ENCODE measurements at regions of chr3 and their contacts with region 1.

Region 1: GRCh38 chr3:143001369-143002082 is at the start of gene U2SURP:
- DNase-seq: peak; percentile 91
- H3K4me3 Mint-ChIP-seq: peak within 1 kb of the TSS; percentile 95
- H3K27ac Mint-ChIP-seq: peak within 1 kb of the TSS; percentile 96
- H3K4me1 Mint-ChIP-seq: peaks cover 45% of the 10 kb centered on the region
- H3K27me3 Mint-ChIP-seq: peaks cover 6% of the 10 kb centered on the region
- total RNA-seq, gene U2SURP: 186 and 205 TPM in 2 replicates

Region 2: DNA sequence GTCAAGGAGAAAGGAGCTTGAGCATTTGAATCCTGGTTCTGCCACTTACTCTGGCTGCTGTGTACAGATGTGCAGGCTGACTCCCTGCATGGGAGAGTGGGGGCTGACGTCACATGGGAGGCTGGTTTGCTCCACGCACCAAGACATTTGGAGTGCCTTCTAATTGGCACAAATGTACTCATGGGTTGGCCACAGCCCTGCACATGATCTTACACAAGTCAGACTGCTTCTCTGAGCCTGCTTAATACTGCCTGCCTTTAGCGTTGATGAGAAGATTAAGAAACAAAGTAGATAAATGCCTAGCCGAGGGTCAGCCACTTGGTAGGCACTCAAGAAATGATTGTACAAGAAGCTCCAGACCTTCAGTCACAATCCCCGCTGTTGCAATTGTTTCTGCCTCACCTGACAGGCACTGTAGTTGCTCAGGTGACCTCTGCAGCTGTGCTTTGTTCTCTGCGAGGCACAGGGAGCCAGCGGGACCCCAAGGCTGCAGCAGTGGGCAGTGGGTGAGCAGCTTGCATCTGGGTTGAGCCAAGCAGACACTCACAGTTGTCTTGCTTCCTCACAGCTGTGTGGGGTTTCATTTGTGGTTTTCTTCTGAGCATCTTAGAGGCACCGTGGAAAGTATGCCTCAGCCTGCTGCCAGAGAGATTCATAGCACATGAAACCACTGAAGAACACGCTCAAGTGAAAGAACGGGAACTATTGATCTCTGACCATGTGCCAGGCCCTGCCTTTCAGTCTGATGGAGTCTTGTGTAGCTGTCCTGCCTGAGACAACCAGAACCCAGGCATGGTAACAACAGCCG is 1205.2 kb before region 1 on chr3:
- intact Hi-C with region 1: loop called (anchors 10 kb)
- DNase-seq: peak; percentile 74
- H3K4me3 Mint-ChIP-seq: peak overlapping the region; percentile 79
- H3K27ac Mint-ChIP-seq: peak overlapping the region; percentile 99
- H3K4me1 Mint-ChIP-seq: peaks cover 47% of the 10 kb centered on the region
- H3K27me3 Mint-ChIP-seq: peaks cover 3% of the 10 kb centered on the region

Region 3: DNA sequence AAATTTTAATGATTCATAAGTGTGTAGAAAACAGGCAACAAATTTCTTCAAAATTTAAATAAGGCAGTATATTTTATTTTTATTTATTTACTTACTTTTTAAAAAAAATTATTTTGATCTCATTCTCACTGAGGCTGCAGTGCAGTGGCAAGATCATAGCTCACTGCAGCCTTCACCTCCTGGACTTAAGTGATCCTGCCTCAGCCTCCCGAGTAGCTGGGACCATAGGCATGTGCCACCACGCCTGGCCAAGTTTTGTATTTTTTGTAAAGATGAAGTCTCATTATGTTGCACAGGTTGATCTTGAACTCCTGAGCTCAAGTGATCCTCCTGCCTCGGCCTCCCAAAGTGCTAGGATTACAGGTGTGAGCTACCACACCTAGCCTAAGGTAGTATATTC is 492.4 kb before region 1 on chr3:
- intact Hi-C with region 1: loop called (anchors 5 kb)
- DNase-seq: no peak
- H3K4me3 Mint-ChIP-seq: peak overlapping the region; percentile 75
- H3K27ac Mint-ChIP-seq: peak overlapping the region; percentile 88
- H3K4me1 Mint-ChIP-seq: peaks cover 12% of the 10 kb centered on the region
- H3K27me3 Mint-ChIP-seq: no peaks in the 10 kb centered on the region

Region 4: DNA sequence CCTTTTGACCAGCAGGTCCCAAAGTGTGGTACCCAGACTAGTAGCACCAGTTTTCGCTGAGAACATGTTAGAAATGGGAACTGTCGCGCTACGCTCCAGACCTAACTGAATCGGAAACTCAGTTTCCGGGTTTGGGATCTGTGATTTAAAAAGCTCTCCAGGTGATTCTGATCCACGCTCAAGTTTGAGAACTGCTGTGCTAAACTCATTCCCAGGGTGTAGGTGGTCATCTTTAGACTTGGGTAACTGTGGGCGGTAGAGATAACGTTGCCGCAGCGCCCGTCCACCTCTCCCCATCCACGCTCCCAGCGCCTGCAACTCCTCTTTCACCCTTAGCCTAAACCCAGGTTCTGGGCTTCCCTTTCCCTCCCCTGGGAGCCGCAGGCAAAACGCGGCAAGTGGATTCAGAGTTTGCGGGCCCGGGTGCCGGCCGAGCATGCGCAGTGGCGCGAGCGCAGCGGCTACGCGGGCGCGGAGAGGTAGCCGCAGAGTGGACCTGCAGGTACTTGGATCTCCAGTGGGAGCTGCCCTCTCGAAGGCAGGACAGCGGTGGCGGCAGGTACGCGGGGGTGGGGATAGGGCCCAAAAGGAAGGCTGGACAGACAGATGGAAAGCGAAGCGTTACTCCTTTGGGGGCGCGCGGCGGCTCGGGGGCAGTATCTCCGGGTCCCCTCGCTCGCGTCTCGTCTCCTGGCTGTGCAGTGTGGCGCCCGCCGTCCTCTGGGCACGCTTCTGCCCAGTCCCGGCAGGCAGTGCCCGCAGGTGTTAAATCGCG is 405.4 kb before region 1 on chr3 and contains the start of gene PLS1:
- intact Hi-C with region 1: loop called (anchors 1 kb)
- DNase-seq: peak; percentile 89
- H3K4me3 Mint-ChIP-seq: peak within 1 kb of the TSS; percentile 95
- H3K27ac Mint-ChIP-seq: peak within 1 kb of the TSS; percentile 69
- H3K4me1 Mint-ChIP-seq: peaks cover 25% of the 10 kb centered on the region
- H3K27me3 Mint-ChIP-seq: peaks cover 4% of the 10 kb centered on the region
- total RNA-seq, gene PLS1: 4.4 and 4.8 TPM in 2 replicates

Region 5: DNA sequence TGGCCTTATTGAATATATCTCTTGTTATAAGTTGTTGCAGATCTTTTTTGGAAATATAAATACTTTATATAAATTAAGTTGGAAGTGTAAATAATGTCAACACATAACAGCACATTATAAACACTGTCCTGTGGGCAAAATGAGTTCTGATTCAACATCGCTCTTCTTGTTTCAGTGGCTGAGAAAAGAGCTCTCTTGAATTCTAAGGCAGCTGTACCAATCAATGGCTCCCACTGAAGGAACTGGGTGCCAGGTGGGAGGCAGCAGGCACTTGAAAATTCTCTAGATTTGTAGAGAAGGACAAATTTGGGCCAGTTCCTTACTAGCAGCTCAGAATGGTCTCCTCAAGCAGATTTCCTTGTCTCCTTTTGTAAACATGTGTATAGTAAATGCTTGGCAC is 163.7 kb after region 1 on chr3:
- intact Hi-C with region 1: loop called (anchors 2 kb)
- DNase-seq: no peak
- H3K4me3 Mint-ChIP-seq: peak overlapping the region; percentile 52
- H3K27ac Mint-ChIP-seq: peak overlapping the region; percentile 87
- H3K4me1 Mint-ChIP-seq: peaks cover 71% of the 10 kb centered on the region
- H3K27me3 Mint-ChIP-seq: peaks cover 2% of the 10 kb centered on the region